ENCODE measurements at regions of chr10 and their contacts with region 1.

Region 1: DNA sequence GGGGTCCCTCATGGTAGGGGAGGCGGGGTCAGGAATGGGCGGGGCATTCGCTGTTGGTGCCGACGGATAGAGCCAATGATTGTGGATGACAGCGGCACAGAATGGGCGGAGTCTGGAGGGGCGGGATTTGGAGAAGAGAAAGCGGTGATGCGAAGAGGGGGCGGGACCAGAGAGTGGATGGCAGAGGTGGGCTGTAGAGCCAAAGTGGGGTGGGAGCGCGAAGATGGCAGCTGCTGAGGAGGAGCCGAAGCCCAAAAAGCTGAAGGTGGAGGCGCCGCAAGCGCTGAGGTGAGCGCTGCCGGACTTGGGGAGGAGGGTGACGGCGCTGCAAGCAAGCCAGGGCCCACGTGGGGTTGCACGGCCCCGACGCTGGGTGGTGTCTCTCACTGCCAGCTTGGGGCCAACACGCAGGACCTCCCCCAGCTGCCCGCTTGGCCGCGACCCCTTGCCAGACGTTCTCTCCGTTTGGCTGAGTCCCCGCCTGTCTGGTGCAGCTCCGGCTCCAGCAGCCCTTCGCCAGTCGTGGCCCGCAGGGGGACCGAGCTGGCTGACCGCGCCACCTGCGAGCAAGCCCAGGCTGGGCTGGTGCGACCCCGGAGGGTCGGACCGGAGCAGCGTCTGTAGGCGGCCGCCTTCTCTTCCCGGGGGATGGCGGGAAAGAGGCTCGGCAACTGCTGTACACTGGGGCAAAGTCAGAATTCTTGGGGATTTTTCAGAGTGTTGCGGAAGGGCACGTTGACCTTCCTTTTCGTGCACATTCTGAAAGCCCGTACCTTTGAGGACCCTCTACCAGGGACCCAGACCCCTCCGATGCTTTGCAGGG is at the start of gene ADK:
- DNase-seq: peak; percentile 97 to 99
- ATAC-seq: peak; percentile 93 to 94
- H3K4me3 ChIP-seq: peak within 1 kb of the TSS; percentile 86
- H3K27ac ChIP-seq: peak within 1 kb of the TSS; percentile 83 to 88
- H3K4me1 ChIP-seq: peaks cover 25% of the 10 kb centered on the region
- CTCF ChIP-seq: no peak
- EP300 ChIP-seq: no peak
- POLR2A ChIP-seq: peak; percentile 73
- RAD21 ChIP-seq: no peak; a peak in 1 of 5 replicates
- polyA plus RNA-seq, gene ADK: 38.4 and 40.7 TPM in 2 replicates

Region 2: DNA sequence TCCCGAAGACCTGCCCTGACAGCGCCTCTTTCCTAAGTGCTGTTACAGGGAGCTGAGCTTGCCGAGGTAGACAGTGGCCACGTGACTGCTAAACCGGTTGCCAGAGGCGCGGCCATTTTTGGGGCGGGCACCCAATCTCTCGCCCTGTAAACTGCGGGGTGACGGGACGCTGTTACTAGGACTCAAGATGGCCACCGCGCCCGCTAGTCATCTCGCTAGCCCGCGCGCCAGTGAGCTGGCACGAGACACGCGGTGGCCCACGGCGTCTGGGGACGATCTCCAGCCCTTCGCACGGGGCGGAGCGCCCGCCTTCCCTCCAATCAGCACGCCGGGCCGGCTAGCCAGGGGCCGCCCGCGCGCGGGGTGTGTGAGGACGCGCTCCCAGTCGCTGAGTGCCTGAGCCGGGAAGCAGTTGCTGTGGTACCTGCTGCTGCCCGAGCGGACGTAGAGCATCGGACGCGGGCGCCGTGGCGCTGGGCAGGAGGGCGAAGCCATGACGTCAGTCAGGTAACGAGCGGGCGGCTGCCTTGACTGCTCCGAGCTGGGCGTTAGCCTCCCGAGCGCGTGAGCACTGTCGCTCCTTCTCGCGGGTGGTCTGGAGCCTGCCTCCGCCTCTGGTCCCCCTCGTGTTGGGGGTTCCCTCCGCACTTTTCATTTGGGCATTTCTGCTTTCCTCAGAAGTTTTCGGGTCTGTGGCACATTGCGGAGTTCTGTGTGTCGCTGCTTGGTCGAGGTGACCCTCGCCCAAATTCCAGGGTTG is 25.3 kb after region 1 on chr10:
- CTCF ChIA-PET with region 1: interaction called, 4 read pairs
- POLR2A ChIA-PET with region 1: interaction called, 11 read pairs
- DNase-seq: peak; percentile 96 to 97
- ATAC-seq: peak; percentile 98
- H3K4me3 ChIP-seq: peak overlapping the region; percentile 67
- H3K27ac ChIP-seq: peak overlapping the region; percentile 77 to 86
- H3K4me1 ChIP-seq: peaks cover 23% of the 10 kb centered on the region
- CTCF ChIP-seq: no peak; the same call in 2 of the 3 replicates
- EP300 ChIP-seq: no peak
- POLR2A ChIP-seq: peak; percentile 82
- RAD21 ChIP-seq: no peak; a peak in 1 of 5 replicates

Measured in A549 (cell line).